ENCODE measurements at regions of chr1 and their contacts with region 1.

Region 1: DNA sequence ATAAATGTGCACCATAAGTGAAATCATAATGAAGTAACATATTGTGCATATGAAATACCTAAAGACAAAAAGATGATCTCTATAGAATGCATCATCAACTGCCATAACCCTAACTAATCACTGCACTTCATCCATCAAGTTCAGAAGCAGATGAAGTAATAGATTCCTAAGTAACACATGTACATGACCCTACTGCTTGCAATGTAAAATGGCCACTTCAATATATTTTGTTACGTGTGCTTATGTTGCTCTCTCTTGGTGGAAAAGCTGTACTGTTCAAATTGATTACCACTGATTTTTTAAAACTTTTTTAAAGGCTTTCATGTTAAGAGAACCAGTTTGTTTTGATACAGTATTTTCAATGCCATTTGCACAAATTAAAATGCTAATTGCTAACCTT is 141.8 kb downstream of the TTLL7 start:
- DNase-seq: peak; percentile 36
- H3K4me3 ChIP-seq: no peak overlapping the region
- H3K27ac ChIP-seq: no peak overlapping the region
- H3K4me1 ChIP-seq: peaks cover 4% of the 10 kb centered on the region
- H3K27me3 ChIP-seq: peaks cover 68% of the 10 kb centered on the region
- CTCF ChIP-seq: peak; percentile 57

Region 2: DNA sequence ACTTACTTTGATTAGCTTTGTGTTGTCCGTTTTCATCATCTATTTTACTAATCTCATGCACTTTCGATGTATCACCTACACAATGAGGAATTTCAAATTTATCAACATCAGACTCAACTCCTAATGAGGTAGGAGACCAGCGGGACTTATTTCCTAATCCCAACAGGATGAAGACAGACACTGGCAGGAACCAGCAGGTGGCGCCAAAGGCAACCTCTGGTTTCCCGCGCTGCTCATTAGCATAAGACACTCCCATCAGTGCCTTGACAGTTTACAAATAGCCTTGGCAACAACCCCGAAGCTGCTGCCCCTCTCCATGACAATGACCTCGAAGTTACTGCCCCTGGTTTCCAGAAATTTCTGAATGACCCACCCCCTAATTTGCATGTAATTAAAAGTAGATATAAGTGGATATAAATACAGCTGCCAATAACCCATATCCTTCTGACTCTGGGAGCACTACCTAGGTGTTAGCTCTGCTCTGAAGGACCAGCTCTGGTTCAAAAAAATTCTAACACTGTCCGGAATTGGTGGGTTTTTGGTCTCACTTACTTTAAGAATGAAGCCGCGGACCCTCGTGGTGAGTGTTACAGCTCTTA is 1081.6 kb before region 1 on chr1:
- CTCF ChIA-PET with region 1: no interaction called
- POLR2A ChIA-PET with region 1: no interaction called
- intact Hi-C with region 1: loop called (anchors 5 kb)
- DNase-seq: peak; percentile 83
- H3K4me3 ChIP-seq: no peak overlapping the region
- H3K27ac ChIP-seq: no peak overlapping the region
- H3K4me1 ChIP-seq: no peaks in the 10 kb centered on the region
- H3K27me3 ChIP-seq: peaks cover 24% of the 10 kb centered on the region
- CTCF ChIP-seq: peak; percentile 91

Region 3: GRCh38 chr1:83545066-83545862 is 311.8 kb before region 1 on chr1:
- CTCF ChIA-PET with region 1: no interaction called
- POLR2A ChIA-PET with region 1: no interaction called
- intact Hi-C with region 1: loop called (anchors 10 kb)
- DNase-seq: peak; percentile 49
- H3K4me3 ChIP-seq: no peak overlapping the region
- H3K27ac ChIP-seq: no peak overlapping the region
- H3K4me1 ChIP-seq: no peaks in the 10 kb centered on the region
- H3K27me3 ChIP-seq: no peaks in the 10 kb centered on the region
- CTCF ChIP-seq: peak; percentile 50; the same call in 1 of the 2 replicates

Region 4: GRCh38 chr1:83593073-83593472 is 264.0 kb before region 1 on chr1:
- CTCF ChIA-PET with region 1: no interaction called
- POLR2A ChIA-PET with region 1: no interaction called
- intact Hi-C with region 1: loop called (anchors 10 kb)
- DNase-seq: peak; percentile 4
- H3K4me3 ChIP-seq: no peak overlapping the region
- H3K27ac ChIP-seq: no peak overlapping the region
- H3K4me1 ChIP-seq: no peaks in the 10 kb centered on the region
- H3K27me3 ChIP-seq: no peaks in the 10 kb centered on the region
- CTCF ChIP-seq: peak; percentile 36; the same call in 1 of the 2 replicates

Region 5: GRCh38 chr1:83725736-83726360 is 131.3 kb before region 1 on chr1:
- CTCF ChIA-PET with region 1: no interaction called
- POLR2A ChIA-PET with region 1: no interaction called
- intact Hi-C with region 1: no loop called
- DNase-seq: no peak
- H3K4me3 ChIP-seq: no peak overlapping the region
- H3K27ac ChIP-seq: no peak overlapping the region
- H3K4me1 ChIP-seq: no peaks in the 10 kb centered on the region
- H3K27me3 ChIP-seq: no peaks in the 10 kb centered on the region
- CTCF ChIP-seq: no peak

Region 6: DNA sequence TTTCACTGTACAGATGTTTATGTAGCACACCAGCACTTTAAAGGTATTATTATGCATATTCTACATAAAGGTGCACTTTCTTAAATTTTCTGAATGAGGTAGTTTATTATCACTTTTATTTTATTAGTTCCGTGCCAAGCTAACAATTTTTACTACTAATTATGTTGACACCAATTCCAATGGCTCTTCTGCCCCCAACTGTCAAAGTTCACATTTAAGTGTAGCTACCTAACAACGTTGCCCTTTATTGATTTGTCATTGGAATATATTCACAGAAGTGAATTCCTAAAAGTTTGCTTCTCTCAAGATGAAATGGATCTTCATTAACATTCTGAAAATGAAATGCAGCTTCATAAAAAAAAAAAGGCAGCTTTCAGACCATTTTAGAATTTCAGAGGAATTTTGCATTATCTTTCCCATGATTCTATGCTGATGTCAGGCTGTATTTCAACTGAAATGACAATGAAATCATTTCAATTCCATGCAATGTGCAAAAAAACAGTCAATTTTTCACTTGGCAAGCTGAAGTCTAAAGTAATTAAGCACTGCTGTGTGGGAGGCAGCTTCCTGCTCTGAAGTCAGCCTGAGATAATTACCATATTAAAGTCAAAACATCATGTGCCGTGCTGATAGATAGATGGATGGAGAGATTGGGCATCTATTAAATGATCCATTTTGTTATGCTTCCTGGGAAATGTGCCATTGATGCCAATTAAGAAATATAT is 87.3 kb before region 1 on chr1:
- CTCF ChIA-PET with region 1: no interaction called
- POLR2A ChIA-PET with region 1: no interaction called
- intact Hi-C with region 1: no loop called
- DNase-seq: peak; percentile 82
- H3K4me3 ChIP-seq: no peak overlapping the region
- H3K27ac ChIP-seq: no peak overlapping the region
- H3K4me1 ChIP-seq: peaks cover 13% of the 10 kb centered on the region
- H3K27me3 ChIP-seq: peaks cover 63% of the 10 kb centered on the region
- CTCF ChIP-seq: no peak

Region 7: DNA sequence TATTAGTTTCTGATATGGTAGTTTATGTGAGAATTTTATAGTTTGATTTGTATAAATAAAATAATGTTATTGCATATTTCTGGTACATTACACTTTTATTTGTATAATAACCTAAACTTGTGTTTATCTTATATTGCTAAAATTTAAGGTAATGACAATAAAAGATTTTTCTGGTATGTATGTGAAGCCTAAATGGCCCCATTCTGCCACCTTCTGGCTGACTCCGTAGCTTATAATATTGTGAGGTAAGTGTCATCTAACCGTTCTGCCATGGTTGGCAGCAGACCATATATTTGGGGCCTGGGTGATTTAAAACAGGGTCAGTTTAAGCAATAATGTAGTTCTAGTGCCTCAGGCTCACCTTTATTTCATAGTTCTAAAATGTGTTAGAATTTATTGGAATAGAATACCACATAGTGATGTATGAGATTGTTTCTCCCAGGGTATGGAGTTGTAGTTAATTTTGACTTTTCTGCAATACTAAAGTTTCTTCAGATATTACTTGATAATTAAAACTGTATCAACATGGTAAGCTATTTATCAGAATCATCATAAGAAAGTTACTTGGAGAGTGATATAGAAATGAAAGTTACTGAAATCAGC is 265.8 kb after region 1 on chr1:
- CTCF ChIA-PET with region 1: no interaction called
- POLR2A ChIA-PET with region 1: no interaction called
- intact Hi-C with region 1: no loop called
- DNase-seq: peak; percentile 68
- H3K4me3 ChIP-seq: no peak overlapping the region
- H3K27ac ChIP-seq: no peak overlapping the region
- H3K4me1 ChIP-seq: no peaks in the 10 kb centered on the region
- H3K27me3 ChIP-seq: no peaks in the 10 kb centered on the region
- CTCF ChIP-seq: peak; percentile 78

Region 8: DNA sequence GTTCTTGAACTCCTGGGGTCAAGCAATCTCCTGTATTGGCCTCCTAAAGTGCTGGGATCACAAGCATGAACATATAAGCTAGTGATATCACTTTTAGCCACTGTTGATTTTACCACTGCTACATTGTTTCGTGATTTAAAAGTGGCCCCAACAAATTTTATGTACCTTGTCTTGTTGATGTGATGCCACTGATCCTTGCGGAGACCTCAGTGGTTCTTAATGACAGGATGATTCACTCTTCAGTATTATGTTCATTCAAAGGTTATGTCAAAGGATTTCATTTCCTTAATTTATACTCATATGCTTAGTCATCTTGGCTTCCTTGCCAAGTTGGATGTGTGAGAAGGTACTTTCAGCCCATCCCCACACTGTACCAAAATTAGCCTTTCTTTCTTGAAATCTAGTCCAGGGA is 299.1 kb after region 1 on chr1:
- CTCF ChIA-PET with region 1: no interaction called
- POLR2A ChIA-PET with region 1: no interaction called
- intact Hi-C with region 1: no loop called
- DNase-seq: peak; percentile 78
- H3K4me3 ChIP-seq: no peak overlapping the region
- H3K27ac ChIP-seq: no peak overlapping the region
- H3K4me1 ChIP-seq: peaks cover 10% of the 10 kb centered on the region
- H3K27me3 ChIP-seq: no peaks in the 10 kb centered on the region
- CTCF ChIP-seq: no peak